ENCODE measurements at regions of chr11 and their contacts with region 1.

Region 1: DNA sequence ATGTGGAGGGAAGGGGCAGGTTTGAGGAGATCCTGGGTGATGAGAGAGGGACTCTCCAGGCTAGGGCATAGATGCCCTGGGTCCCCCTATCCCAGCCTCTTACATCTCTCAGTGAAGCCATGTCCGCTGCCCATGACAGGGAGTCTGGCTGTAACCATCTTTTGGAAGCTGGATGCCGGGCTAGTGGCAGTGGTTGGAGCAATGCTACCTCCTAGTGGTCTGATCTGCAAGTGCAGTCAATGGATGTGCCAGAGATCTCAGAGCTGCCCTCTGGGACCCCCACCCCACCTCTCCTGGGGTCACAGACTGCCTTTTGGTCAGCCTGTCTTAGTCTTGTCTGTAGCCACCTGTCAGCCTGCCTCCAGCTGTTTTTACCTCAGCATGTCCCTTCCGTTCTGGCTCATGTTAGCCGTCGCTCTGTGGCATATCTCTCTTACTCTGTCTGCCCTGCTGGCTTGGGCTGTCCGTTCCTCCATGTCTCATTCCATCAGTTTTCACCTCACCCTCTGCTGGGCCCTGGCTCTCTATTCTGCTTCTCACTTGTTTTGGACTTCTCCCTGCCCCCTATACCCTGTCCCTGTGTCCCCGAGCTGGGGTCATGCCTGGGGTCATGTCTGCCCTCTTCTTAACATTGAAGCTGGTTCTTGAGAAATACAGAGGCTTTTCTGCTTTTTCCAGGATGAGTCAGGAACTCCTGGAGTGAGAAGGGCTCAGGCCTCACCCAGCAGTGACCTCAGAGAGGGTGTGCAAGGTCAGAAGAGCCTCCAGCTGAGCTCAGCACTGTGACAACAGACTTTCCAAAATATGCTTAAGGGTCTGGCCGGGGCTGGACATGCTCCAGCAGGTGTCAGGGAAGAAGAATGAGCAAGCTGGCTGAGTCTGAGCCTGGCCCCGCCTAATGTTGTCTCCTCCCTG is 52.0 kb upstream of the THY1 start:
- DNase-seq: peak; percentile 42 to 62
- ATAC-seq: peak; percentile 70 to 90; a peak in 5 of 6 replicates
- H3K4me3 ChIP-seq: no peak overlapping the region
- H3K27ac ChIP-seq: peak overlapping the region in 1 of 2 experiments; percentile 64; a peak in 1 of 6 replicates
- H3K4me1 ChIP-seq: 0 out of 3 replicates have a peak, but pooled peaks cover 3% of the 10 kb centered on the region
- CTCF ChIP-seq: peak; percentile 74
- EP300 ChIP-seq: no peak
- POLR2A ChIP-seq: no peak
- RAD21 ChIP-seq: peak; percentile 84 to 88

Region 2: GRCh38 chr11:119334174-119334930 is 140.6 kb before region 1 on chr11 and contains the start of gene RNF26:
- CTCF ChIA-PET with region 1: interaction called, 13 read pairs
- POLR2A ChIA-PET with region 1: no interaction called
- DNase-seq: peak; percentile 96 to 97
- ATAC-seq: peak; percentile 81 to 89
- H3K4me3 ChIP-seq: peak within 1 kb of the TSS; percentile 72
- H3K27ac ChIP-seq: peak within 1 kb of the TSS; percentile 79 to 94
- H3K4me1 ChIP-seq: peaks cover 19% of the 10 kb centered on the region
- CTCF ChIP-seq: no peak
- EP300 ChIP-seq: no peak
- POLR2A ChIP-seq: peak; percentile 53
- RAD21 ChIP-seq: no peak
- polyA plus RNA-seq, gene RNF26: 23.5 and 28.4 TPM in 2 replicates

Region 3: DNA sequence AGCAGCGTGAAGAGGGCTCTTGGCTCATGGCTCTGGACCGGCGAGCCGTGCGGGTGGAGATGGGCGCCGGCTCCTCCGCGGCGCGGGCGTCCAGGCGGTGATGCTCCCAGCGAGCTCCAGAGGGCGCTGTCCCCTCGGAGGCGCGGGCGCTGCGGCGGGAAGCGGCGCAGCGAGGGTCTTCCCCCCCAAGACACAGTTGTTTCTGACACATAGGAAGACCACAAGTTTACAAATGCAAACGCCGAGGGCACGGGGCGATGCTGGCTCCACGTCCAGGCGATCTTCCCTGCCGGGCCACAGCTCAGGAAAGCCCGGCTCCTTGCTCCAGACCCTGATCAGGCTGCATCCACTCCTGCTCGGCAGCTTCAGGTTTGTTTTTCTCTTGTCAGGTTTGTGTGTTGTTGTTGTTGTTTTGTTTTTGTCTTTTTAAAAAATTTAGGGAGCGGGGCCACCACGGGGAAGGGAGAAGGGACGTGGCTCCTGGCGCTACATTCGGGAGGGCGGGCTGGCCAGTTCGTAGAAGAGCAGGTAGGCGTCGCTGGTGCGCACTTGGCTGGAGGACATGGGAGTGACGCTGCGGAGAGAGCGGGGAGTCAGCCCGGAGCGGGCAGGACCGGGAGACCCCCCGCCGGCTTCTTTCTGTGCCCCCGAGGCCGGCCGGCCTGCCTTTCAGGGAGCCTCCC is 118.4 kb before region 1 on chr11:
- CTCF ChIA-PET with region 1: interaction called, 34 read pairs
- POLR2A ChIA-PET with region 1: no interaction called
- DNase-seq: peak; percentile 70 to 90
- ATAC-seq: peak; percentile 82 to 89
- H3K4me3 ChIP-seq: peak overlapping the region; percentile 57
- H3K27ac ChIP-seq: peak overlapping the region; percentile 78 to 87
- H3K4me1 ChIP-seq: peaks cover 30% of the 10 kb centered on the region
- CTCF ChIP-seq: peak; percentile 90
- EP300 ChIP-seq: no peak
- POLR2A ChIP-seq: no peak
- RAD21 ChIP-seq: peak; percentile 60 to 79

Region 4: DNA sequence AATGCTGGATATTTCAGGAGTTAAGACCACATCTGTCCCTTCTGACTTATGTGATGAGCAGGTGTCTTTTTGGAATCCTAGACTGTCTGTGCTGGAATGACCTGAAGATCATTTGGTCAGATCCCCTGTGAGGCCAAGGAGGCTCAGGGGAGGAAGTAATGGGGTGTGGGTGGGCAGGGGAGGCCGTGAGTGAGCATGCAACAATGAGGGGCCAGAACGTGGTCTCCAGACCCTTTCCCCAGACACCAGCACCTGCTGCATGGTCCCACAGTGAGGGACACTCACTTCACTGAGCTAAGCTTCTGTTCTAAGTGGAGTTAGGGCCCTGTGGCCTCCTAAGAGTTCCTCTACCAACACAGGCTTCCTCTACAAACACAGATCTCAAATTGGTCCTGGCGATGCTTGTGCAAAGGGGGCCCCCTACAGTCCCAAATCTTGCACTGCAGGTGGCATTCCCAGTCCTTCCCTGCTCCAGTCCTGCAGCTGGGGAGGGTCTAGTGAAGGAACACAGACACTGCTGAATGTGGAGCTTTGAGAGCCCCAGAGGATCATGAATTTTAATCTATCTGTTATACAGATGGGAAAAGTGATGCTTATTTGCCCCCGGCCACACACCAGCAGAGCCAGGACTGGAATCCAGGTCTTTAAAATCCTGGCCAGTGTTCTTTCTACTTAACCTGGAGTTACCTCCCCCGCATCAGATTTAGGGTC is 100.9 kb before region 1 on chr11:
- CTCF ChIA-PET with region 1: interaction called, 70 read pairs
- POLR2A ChIA-PET with region 1: no interaction called
- DNase-seq: peak; percentile 52 to 72
- ATAC-seq: peak; percentile 67 to 87
- H3K4me3 ChIP-seq: no peak overlapping the region
- H3K27ac ChIP-seq: no peak overlapping the region
- H3K4me1 ChIP-seq: peaks cover 19% of the 10 kb centered on the region
- CTCF ChIP-seq: peak; percentile 73
- EP300 ChIP-seq: no peak
- POLR2A ChIP-seq: no peak
- RAD21 ChIP-seq: peak; percentile 80 to 88

Region 5: DNA sequence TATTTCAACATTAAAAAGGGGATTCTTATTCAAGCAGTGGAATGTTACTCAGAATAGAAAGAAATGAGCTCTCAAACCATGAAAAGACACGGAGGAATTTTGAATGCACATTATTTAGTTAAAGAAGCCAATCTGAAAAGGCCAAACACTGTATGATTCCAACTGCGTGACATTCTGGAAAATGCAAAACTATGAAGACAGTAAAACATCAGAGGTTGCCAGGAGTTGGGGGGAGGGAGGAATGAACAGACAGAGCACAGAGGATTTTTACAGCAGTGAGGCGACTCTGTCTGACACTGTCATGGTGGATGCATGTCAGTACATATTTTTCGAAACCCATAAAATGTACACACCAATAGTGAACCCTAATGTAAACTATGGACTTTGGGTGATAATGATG is 29.1 kb before region 1 on chr11:
- CTCF ChIA-PET with region 1: interaction called, 15 read pairs
- POLR2A ChIA-PET with region 1: no interaction called
- DNase-seq: no peak
- ATAC-seq: no peak
- H3K4me3 ChIP-seq: no peak overlapping the region
- H3K27ac ChIP-seq: no peak overlapping the region
- H3K4me1 ChIP-seq: no peaks in the 10 kb centered on the region
- CTCF ChIP-seq: no peak
- EP300 ChIP-seq: no peak
- POLR2A ChIP-seq: no peak
- RAD21 ChIP-seq: no peak